Activated B cell treated with CpG ODN at 0.5 μM for 24 hours (primary cell): ENCODE measurements at regions of chr11 and their contacts with region 1.

Region 1: DNA sequence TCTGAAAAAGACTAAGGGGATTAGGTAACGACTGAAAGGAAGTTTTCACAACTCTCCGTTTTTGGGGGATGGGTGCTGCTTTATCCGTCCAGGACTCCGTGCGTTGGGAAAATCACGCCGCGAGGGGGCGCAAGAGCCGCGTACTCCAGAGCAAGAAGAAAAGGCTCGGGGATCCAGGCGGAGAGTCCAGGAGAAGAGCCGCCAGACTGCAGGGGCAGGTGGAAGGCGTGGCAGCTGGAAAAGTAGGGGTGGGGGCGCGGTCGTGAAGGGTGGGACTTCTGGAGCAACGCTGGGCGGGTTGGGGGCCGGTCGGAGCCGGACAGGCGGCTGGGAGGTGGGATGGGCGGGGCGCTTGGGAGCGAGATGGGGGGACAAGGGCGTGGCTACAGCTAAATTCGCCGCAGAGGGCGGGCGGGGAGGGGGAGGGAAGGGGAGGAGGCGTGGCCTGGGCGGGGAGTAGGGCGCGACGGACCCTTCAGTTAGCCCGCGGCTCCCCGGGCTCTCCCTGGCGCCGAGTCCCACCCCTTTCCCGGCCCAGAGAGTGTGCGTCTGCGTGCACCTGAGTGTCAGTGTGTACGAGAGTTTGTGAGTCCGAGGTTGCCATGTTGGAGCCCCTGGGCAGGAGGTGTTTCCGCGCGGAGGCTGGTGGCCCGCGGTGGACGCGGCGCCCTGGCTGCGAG is 613 bp upstream of the ARHGEF17 start:
- DNase-seq: peak; percentile 85
- ATAC-seq: peak; percentile 73
- H3K4me3 Mint-ChIP-seq: peak overlapping the region; percentile 93
- H3K27ac Mint-ChIP-seq: no peak overlapping the region
- H3K4me1 Mint-ChIP-seq: peaks cover 11% of the 10 kb centered on the region
- H3K27me3 Mint-ChIP-seq: peaks cover 8% of the 10 kb centered on the region
- CTCF ChIP-seq: no peak

Region 2: DNA sequence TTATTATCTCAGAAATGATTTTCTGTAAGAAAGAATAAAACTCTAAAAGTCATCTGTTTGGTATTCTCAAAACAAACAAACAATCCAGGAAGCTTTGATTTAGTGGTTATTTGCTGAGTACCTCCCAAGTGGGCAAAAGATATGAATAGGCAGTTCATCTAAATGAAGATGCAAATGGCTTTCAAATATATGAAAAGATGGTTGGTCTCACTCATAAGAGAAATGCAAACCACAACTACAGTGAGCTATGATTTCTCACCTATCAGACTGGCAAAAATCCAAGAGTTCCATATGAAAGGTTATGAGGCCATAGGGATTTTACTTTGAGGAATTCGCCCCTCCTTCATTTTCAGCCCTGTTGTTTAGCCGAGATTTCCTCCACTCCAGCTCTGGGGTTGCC is 100.7 kb before region 1 on chr11:
- CTCF ChIA-PET with region 1: no interaction called
- POLR2A ChIA-PET with region 1: no interaction called
- intact Hi-C with region 1: no loop called
- DNase-seq: no peak
- ATAC-seq: no peak
- H3K4me3 Mint-ChIP-seq: no peak overlapping the region
- H3K27ac Mint-ChIP-seq: no peak overlapping the region
- H3K4me1 Mint-ChIP-seq: peaks cover 4% of the 10 kb centered on the region
- H3K27me3 Mint-ChIP-seq: peaks cover 5% of the 10 kb centered on the region
- CTCF ChIP-seq: no peak

Region 3: GRCh38 chr11:73295231-73295995 is 12.1 kb before region 1 on chr11:
- CTCF ChIA-PET with region 1: interaction called, 5 read pairs
- POLR2A ChIA-PET with region 1: interaction called, 6 read pairs
- intact Hi-C with region 1: loop called (anchors 1 kb)
- DNase-seq: peak; percentile 68
- ATAC-seq: peak; percentile 91
- H3K4me3 Mint-ChIP-seq: no peak overlapping the region
- H3K27ac Mint-ChIP-seq: no peak overlapping the region
- H3K4me1 Mint-ChIP-seq: peaks cover 6% of the 10 kb centered on the region
- H3K27me3 Mint-ChIP-seq: peaks cover 10% of the 10 kb centered on the region
- CTCF ChIP-seq: peak; percentile 85

Region 4: DNA sequence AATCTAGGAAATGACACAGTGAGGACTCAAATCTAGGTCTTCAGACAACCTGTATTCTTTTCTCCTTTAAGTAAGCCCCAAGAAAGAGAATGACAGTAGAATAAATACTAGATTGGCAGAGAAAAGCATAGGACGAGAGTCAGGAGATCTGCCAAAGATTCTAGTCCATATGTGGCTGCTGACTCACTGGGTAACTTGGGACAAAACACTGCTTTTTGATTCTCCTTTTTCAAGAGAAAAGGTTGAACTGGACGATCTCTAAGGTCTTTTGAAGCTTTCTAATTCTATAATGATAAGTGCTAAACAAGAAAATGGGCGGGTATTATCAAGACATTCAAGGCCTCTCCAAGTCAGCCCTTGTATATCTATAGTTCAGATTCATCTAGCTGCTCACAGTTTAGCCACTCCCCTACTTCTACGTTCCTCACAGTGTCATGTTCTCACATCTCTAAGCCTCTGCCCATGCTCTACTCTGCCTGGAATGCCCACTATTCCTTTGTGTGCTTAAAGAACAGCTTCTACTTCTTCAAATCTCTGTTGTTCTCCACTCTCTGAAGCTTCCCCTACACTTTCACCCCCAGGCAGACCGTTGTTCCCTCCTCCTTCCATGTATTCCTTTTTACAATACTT is 121.8 kb after region 1 on chr11:
- CTCF ChIA-PET with region 1: no interaction called
- POLR2A ChIA-PET with region 1: no interaction called
- intact Hi-C with region 1: no loop called
- DNase-seq: no peak
- ATAC-seq: no peak
- H3K4me3 Mint-ChIP-seq: no peak overlapping the region
- H3K27ac Mint-ChIP-seq: peak overlapping the region; percentile 19
- H3K4me1 Mint-ChIP-seq: peaks cover 2% of the 10 kb centered on the region
- H3K27me3 Mint-ChIP-seq: no peaks in the 10 kb centered on the region
- CTCF ChIP-seq: no peak

Region 5: DNA sequence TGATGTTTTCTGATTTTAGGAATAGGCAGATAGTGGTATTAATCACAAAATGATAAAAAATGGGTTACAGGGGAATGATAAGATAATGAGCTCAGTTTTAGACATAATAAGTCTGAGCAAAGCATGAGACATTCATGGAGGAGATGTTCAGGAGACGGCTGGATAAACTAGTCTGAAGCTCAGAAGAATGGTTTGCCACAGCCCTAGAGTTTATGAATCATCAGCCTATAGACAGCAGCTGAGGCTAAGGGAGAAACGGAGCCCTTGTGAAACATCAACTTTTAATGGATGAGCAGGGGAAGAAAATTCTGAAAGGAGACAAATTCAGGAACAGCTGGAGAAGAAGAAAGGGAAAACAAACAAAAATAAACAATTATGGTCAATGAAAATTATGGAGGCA is 155.9 kb after region 1 on chr11:
- CTCF ChIA-PET with region 1: no interaction called
- POLR2A ChIA-PET with region 1: no interaction called
- intact Hi-C with region 1: no loop called
- DNase-seq: no peak
- ATAC-seq: no peak
- H3K4me3 Mint-ChIP-seq: no peak overlapping the region
- H3K27ac Mint-ChIP-seq: no peak overlapping the region
- H3K4me1 Mint-ChIP-seq: peaks cover 17% of the 10 kb centered on the region
- H3K27me3 Mint-ChIP-seq: no peaks in the 10 kb centered on the region
- CTCF ChIP-seq: no peak